ENCODE measurements at regions of chr14 and their contacts with region 1.

Region 1: GRCh38 chr14:31292937-31293616 is 85.5 kb upstream of the HECTD1 start:
- DNase-seq: no peak
- H3K4me3 Mint-ChIP-seq: no peak overlapping the region
- H3K27ac Mint-ChIP-seq: no peak overlapping the region
- H3K4me1 Mint-ChIP-seq: no peaks in the 10 kb centered on the region
- H3K27me3 Mint-ChIP-seq: no peaks in the 10 kb centered on the region

Region 2: GRCh38 chr14:31127690-31128089 is 165.4 kb before region 1 on chr14:
- intact Hi-C with region 1: no loop called
- DNase-seq: peak; percentile 88
- H3K4me3 Mint-ChIP-seq: peak overlapping the region; percentile 14
- H3K27ac Mint-ChIP-seq: peak overlapping the region; percentile 59
- H3K4me1 Mint-ChIP-seq: peaks cover 31% of the 10 kb centered on the region
- H3K27me3 Mint-ChIP-seq: no peaks in the 10 kb centered on the region

Region 3: GRCh38 chr14:31336652-31337051 is 43.6 kb after region 1 on chr14:
- intact Hi-C with region 1: loop called (anchors 1 kb)
- DNase-seq: no peak
- H3K4me3 Mint-ChIP-seq: no peak overlapping the region
- H3K27ac Mint-ChIP-seq: no peak overlapping the region
- H3K4me1 Mint-ChIP-seq: no peaks in the 10 kb centered on the region
- H3K27me3 Mint-ChIP-seq: no peaks in the 10 kb centered on the region